OCI-LY7 (cell line): ENCODE measurements at regions of chr3 and their contacts with region 1.

Region 1: DNA sequence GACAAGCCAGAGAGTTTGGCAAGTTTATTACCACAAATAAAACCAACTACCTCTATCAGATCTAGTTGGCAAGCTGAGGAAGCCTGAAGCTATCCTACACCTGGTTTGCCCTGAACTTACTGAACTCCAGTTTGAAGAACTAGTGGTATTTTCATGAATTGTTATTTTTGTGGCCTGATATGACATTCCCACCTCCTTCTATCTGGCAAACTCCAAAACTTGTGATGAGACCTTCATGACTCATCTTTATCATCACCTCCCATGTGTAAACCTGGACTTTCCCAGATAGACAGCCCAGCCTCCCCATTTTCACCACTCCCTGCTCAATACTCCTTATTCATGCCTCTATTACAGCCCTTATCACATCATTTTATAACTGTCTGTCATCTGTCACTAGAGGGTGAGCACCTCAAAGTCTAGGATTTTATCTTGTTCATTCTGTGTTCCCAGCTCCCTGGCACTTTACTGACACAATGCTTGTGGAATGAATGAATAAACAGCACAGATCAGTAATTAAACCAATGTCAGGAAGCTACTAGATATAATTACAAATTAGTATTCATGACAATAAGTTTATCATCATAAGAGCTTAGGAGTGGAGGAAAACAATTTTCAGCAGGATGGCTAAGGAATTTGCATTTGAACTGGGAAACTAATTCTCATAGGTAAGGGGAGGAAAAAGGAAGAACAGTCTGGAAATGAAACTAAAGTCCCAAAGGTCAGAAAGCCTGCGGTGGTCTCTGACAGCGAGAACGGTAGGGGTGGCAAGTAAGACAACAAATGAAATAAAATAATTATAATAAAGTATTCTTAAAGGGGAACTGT is 13.2 kb upstream of the TRANK1 start:
- DNase-seq: no peak
- H3K4me3 ChIP-seq: peak overlapping the region; percentile 30
- H3K27ac ChIP-seq: no peak overlapping the region
- H3K4me1 ChIP-seq: peaks cover 14% of the 10 kb centered on the region
- CTCF ChIP-seq: no peak

Region 2: DNA sequence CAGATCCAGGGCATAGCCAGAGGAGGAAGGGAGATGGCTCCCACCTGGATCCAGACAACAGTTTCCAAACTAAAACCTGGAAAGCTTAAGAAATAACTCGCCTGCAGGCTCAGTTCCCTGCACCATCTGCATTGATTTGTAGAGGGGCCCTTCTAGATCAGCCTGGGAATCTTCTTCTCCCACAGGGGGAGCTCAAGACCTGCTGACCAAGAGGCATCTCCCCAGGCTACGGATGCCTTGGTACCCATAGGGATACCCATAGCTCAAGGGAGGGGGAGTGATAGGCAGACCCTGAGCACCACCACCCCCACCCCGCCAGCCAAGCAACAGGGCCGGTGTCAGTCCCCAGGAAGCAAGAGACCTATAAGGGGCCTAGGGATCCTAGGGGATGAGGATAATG is 165.7 kb before region 1 on chr3:
- CTCF ChIA-PET with region 1: interaction called, 4 read pairs
- POLR2A ChIA-PET with region 1: no interaction called
- intact Hi-C with region 1: loop called (anchors 1 kb)
- DNase-seq: peak; percentile 51
- H3K4me3 ChIP-seq: no peak overlapping the region
- H3K27ac ChIP-seq: no peak overlapping the region
- H3K4me1 ChIP-seq: no peaks in the 10 kb centered on the region
- CTCF ChIP-seq: peak; percentile 66

Region 3: DNA sequence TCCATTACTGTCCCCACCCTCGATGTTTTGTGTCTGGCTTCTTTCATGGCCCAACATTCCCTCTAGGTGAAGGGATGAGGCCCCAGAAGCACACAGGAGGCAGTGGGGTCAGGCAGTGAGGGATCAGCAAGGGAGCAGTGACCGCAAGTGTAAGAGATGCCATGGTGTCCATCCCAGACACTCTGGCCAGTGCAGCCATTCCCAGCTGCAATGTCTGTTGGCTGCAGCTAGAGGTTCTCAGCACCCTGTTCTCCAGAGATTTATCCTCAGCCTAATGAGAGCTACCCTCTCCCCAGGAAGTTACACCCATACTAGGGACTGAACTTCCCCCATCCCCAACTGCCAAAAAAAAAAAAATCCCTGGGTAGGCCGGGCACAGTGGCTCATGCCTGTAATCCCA is 53.4 kb before region 1 on chr3:
- CTCF ChIA-PET with region 1: interaction called, 10 read pairs
- POLR2A ChIA-PET with region 1: interaction called, 9 read pairs
- intact Hi-C with region 1: loop called (anchors 1 kb)
- DNase-seq: no peak
- H3K4me3 ChIP-seq: no peak overlapping the region
- H3K27ac ChIP-seq: no peak overlapping the region
- H3K4me1 ChIP-seq: peaks cover 74% of the 10 kb centered on the region
- CTCF ChIP-seq: peak; percentile 62

Region 4: DNA sequence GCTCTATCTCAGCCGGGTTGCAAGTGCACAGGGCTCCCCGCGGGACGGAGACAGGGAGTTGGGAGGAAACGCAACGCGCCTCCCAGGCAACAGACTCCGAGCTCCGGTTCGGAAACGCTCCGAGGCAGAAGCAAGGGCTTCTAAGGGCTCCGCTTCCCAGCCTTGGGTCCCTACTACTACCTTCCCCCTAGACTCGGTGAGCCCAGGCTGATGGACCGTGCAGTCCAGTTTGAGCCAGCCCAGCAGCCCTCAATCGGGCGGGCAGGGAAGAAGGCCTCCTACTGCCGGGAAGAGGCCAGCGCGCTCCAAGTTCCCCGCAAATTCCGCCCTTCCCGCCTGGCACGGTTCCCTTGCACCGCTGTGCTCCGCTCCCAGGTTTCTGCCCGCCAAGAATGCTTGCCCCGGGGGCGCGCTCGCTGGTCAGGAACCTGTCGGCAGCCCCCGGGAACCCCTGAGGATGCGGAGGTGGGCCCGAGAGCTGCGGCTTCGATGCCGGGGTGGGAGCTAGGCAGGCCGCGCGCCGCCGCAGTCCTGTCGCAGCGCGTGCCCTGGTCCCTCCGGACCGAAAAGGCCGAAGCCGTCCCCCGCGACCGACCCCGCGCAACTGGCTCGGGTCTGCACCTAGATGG is 13.9 kb before region 1 on chr3:
- CTCF ChIA-PET with region 1: interaction called, 4 read pairs
- POLR2A ChIA-PET with region 1: interaction called, 10 read pairs
- intact Hi-C with region 1: no loop called
- DNase-seq: peak; percentile 62
- H3K4me3 ChIP-seq: peak overlapping the region; percentile 70
- H3K27ac ChIP-seq: peak overlapping the region; percentile 10
- H3K4me1 ChIP-seq: peaks cover 11% of the 10 kb centered on the region
- CTCF ChIP-seq: no peak

Region 5: GRCh38 chr3:37149257-37149656 is 191.2 kb after region 1 on chr3:
- CTCF ChIA-PET with region 1: no interaction called
- POLR2A ChIA-PET with region 1: no interaction called
- intact Hi-C with region 1: no loop called
- DNase-seq: no peak
- H3K4me3 ChIP-seq: no peak overlapping the region
- H3K27ac ChIP-seq: no peak overlapping the region
- H3K4me1 ChIP-seq: no peaks in the 10 kb centered on the region
- CTCF ChIP-seq: no peak